K562 (cell line): ENCODE measurements at regions of chr9 and their contacts with region 1.

Region 1: GRCh38 chr9:92234514-92234913 is 59.0 kb downstream of the IARS1 start:
- DNase-seq: no peak
- ATAC-seq: peak; percentile 17
- H3K4me3 ChIP-seq: no peak overlapping the region
- H3K27ac ChIP-seq: no peak overlapping the region
- H3K4me1 ChIP-seq: no peaks in the 10 kb centered on the region
- H3K27me3 ChIP-seq: no peaks in the 10 kb centered on the region
- CTCF ChIP-seq: no peak
- EP300 ChIP-seq: no peak
- POLR2A ChIP-seq: peak; percentile 46; the same call in 1 of the 2 replicates
- RAD21 ChIP-seq: no peak

Region 2: GRCh38 chr9:92224177-92224576 is 10.3 kb before region 1 on chr9:
- CTCF ChIA-PET with region 1: no interaction called
- POLR2A ChIA-PET with region 1: interaction called, 13 read pairs
- in situ Hi-C with region 1: no loop called
- intact Hi-C with region 1: no loop called
- DNase-seq: no peak
- ATAC-seq: no peak
- H3K4me3 ChIP-seq: no peak overlapping the region
- H3K27ac ChIP-seq: no peak overlapping the region
- H3K4me1 ChIP-seq: no peaks in the 10 kb centered on the region
- H3K27me3 ChIP-seq: no peaks in the 10 kb centered on the region
- CTCF ChIP-seq: no peak
- EP300 ChIP-seq: no peak
- POLR2A ChIP-seq: no peak
- RAD21 ChIP-seq: no peak